HEK293T (cell line): ENCODE measurements at regions of chr19 and their contacts with region 1.

Region 1: GRCh38 chr19:3035542-3036118 is 6.5 kb upstream of the TLE2 start:
- DNase-seq: peak; percentile 99

Region 2: DNA sequence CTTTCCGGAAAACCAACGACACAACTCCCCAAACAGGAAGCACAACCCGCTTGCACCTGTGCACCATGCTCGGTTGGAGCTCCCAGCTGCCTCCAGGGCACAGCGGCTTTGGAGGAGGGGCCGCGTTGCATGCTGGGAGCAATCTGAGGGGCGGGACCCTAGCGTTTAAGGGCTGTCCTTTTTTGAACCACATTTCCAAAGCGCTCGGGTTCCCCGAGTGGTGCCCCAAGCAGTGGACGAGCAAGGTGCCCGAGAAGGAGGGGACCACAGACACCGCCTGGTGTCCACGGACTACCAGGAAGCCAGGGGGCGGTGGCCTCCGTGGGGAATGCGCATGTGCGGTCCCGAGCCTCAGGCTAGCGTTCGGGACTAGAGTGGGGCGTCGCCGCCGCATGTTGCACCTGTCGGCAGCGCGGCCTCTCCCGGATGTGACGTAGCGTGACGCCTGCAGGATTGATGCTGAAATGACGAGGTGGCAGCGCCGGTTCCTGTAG is 146.9 kb before region 1 on chr19:
- CTCF ChIA-PET with region 1: no interaction called
- POLR2A ChIA-PET with region 1: no interaction called
- DNase-seq: no peak

Region 3: GRCh38 chr19:2950286-2951124 is 85.1 kb before region 1 on chr19:
- CTCF ChIA-PET with region 1: interaction called, 5 read pairs
- POLR2A ChIA-PET with region 1: interaction called, 18 read pairs
- DNase-seq: peak; percentile 98

Region 4: DNA sequence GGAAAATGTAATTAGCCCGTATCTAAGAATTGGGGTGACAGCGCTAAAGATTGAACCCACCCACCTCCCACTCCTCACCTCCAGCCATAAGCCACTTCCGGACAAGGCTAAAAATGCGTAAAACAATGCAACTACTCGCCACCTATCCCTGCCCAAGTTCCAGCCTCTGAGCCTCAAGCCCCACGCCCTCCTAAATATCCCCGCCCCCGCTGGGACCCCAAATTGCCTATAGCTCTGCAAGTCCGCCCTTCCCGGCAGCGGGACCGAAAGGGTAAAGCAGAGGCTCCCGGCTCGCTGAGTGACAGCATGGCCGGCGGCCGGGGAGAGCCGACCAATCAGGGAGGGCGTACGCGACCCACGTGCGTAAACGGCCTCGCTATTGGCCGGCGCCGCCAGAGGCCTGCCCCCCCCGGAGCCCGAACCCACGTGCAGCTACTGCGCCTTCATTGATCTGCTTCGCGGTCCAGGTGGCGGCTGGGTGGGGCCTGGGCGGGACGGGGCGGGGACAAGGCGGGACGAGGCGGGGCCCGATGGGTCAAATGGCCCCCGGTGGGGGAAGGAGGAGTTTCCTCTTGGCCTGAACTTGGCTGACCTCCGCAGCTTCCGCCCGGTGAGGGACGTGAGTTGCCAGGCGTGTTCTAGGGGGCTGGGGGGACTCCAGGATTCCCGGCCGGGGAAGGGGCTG is 58.5 kb before region 1 on chr19 and contains the start of gene TLE6:
- CTCF ChIA-PET with region 1: interaction called, 5 read pairs
- POLR2A ChIA-PET with region 1: interaction called, 19 read pairs
- DNase-seq: peak; percentile 99

Region 5: GRCh38 chr19:3047425-3048189 is 12.0 kb after region 1 on chr19:
- CTCF ChIA-PET with region 1: interaction called, 4 read pairs
- POLR2A ChIA-PET with region 1: interaction called, 18 read pairs
- DNase-seq: peak; percentile 79

Region 6: DNA sequence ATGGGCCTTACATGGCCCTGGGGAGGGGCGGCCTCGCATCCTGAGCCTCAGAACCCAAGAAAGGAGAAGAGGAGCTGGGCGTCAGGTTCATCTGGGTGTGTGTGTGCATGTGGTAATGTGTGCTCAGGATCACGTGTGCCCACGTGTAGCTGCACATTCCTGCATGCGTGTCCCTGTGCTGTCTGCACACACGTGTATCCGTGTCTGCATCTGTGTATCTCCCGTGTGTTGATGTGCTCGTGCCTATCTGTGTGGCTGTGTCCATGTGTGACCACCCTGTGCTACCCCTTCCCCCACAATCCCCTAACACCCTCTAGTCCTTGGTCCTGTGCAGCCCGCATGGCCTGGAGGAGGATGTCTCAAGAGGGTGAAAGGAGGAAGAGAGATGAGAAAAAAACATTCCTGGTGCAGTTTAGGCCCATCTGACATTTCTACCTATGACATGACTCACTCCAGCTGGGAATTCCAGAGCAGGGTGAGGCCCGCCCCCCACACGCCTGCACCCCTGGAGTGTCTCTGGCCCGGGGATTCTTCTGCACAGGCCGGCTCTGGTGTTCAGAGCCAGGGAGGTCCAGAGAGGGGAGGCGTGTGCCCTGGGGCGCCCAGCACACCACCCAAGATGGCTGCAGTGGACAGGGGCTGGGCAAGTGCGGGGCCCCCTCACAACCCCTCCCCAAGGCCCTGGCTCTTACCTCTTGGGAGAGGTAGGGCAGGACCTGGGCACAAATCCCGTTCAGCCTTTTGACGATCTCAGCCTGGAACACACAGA is 19.5 kb after region 1 on chr19:
- CTCF ChIA-PET with region 1: interaction called, 4 read pairs
- POLR2A ChIA-PET with region 1: interaction called, 13 read pairs
- DNase-seq: no peak

Region 7: DNA sequence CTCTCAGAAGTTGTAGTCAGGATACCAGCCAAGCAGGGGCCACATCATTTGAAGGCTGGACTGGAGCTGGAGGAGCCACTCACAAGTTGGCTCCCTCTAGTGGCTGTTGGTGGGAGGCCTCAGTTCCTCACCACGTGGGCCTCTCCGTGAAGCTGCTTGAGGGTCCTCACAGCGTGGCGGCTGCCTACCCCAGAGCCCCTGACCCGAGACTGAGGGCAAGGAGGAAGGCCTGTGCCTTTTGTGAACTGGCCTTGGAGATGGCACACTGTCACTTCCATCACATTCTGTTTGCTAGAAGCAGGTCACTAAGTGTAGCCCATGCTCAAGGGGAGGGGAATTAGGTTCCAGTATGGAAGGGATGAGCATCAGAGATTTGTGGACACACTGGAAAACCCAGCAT is 73.1 kb after region 1 on chr19:
- CTCF ChIA-PET with region 1: interaction called, 13 read pairs
- POLR2A ChIA-PET with region 1: interaction called, 5 read pairs
- DNase-seq: peak; percentile 67